ENCODE measurements at regions of chr17 and their contacts with region 1.

Region 1: DNA sequence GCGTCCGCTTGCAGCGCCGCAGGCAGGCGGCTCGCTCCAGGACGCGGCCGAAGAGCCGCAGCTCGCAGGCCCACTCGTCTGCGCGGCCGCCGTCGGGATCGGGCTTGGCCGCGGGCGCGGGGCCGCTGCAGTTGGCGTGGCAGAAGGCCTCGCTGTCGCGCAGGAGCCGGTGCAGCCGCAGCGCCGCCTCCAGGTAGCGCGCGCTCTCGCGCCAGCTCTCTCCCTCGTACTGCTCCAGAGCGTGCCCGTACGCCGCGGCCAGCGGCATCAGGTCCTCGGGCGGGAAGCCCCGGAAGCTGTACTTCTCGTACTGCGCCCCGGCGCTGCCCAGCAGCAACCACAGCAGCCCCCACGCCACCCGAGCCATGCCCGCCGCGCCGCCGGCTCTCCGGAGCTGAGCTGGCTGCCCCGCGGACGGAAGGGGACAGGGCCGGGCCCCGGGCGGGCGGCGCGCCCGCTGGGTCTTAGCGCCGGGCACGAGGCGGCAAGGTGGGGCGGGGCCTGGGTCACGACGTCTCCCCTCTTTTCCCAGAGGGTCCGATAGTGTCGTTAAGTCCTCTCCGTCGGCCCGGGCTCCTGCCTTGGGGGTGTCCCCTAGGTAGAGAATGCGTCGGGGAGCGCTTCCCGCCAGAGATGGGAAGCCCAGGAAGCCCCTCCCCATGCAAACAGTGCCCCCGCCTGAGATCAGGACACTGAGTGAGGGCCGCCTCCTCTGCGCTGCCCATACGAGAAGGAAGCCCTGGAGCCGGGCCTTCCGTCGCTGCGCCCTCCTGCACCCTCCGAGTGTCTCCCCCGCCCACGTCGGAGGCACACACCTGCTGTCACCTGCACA is at the start of gene P3H4:
- DNase-seq: peak; percentile 86 to 87
- ATAC-seq: peak; percentile 83 to 86
- H3K4me3 ChIP-seq: peak within 1 kb of the TSS; percentile 79
- H3K27ac ChIP-seq: peak within 1 kb of the TSS; percentile 96 to 97
- H3K4me1 ChIP-seq: peaks cover 30% of the 10 kb centered on the region
- CTCF ChIP-seq: peak; percentile 90
- EP300 ChIP-seq: no peak
- POLR2A ChIP-seq: peak; percentile 47; the same call in 1 of the 2 replicates
- RAD21 ChIP-seq: peak; percentile 51 to 80
- polyA plus RNA-seq, gene P3H4: 32.1 and 36.0 TPM in 2 replicates

Region 2: GRCh38 chr17:41688699-41689496 is 122.9 kb before region 1 on chr17 and contains the start of gene EIF1:
- CTCF ChIA-PET with region 1: interaction called, 4 read pairs
- POLR2A ChIA-PET with region 1: interaction called, 17 read pairs
- DNase-seq: peak; percentile 98 to 100
- ATAC-seq: peak; percentile 71 to 83
- H3K4me3 ChIP-seq: peak within 1 kb of the TSS; percentile 93
- H3K27ac ChIP-seq: peak within 1 kb of the TSS; percentile 95 to 98
- H3K4me1 ChIP-seq: peaks cover 29% of the 10 kb centered on the region
- CTCF ChIP-seq: no peak
- EP300 ChIP-seq: peak in 1 of 2 experiments; percentile 52; a peak in 1 of 5 replicates
- POLR2A ChIP-seq: peak; percentile 92
- RAD21 ChIP-seq: no peak
- polyA plus RNA-seq, gene EIF1: 873 and 1,224 TPM in 2 replicates

Region 3: GRCh38 chr17:41786227-41787020 is 25.3 kb before region 1 on chr17 and contains the start of gene JUP:
- CTCF ChIA-PET with region 1: interaction called, 3,262 read pairs
- POLR2A ChIA-PET with region 1: interaction called, 14 read pairs
- DNase-seq: peak; percentile 100
- ATAC-seq: peak; percentile 90 to 95
- H3K4me3 ChIP-seq: peak within 1 kb of the TSS; percentile 83
- H3K27ac ChIP-seq: peak within 1 kb of the TSS; percentile 86
- H3K4me1 ChIP-seq: peaks cover 43% of the 10 kb centered on the region
- CTCF ChIP-seq: peak; percentile 96
- EP300 ChIP-seq: no peak; a peak in 1 of 5 replicates
- POLR2A ChIP-seq: peak; percentile 85
- RAD21 ChIP-seq: peak; percentile 42 to 70; a peak in 4 of 5 replicates
- polyA plus RNA-seq, gene JUP: 54.8 and 110 TPM in 2 replicates

Region 4: GRCh38 chr17:41824086-41824485 is 12.3 kb after region 1 on chr17:
- CTCF ChIA-PET with region 1: interaction called, 19 read pairs
- POLR2A ChIA-PET with region 1: interaction called, 8 read pairs
- DNase-seq: no peak
- ATAC-seq: no peak; a peak in 1 of 6 replicates
- H3K4me3 ChIP-seq: no peak overlapping the region
- H3K27ac ChIP-seq: no peak overlapping the region
- H3K4me1 ChIP-seq: no peaks in the 10 kb centered on the region
- CTCF ChIP-seq: no peak
- EP300 ChIP-seq: no peak
- POLR2A ChIP-seq: no peak
- RAD21 ChIP-seq: no peak

Region 5: GRCh38 chr17:41864836-41865595 is 53.3 kb after region 1 on chr17 and contains the start of gene KLHL11:
- CTCF ChIA-PET with region 1: interaction called, 5 read pairs
- POLR2A ChIA-PET with region 1: interaction called, 13 read pairs
- DNase-seq: peak; percentile 93 to 96
- ATAC-seq: peak; percentile 89 to 96
- H3K4me3 ChIP-seq: peak within 1 kb of the TSS; percentile 89
- H3K27ac ChIP-seq: peak within 1 kb of the TSS; percentile 92 to 94
- H3K4me1 ChIP-seq: peaks cover 34% of the 10 kb centered on the region
- CTCF ChIP-seq: no peak
- EP300 ChIP-seq: no peak
- POLR2A ChIP-seq: peak; percentile 96
- RAD21 ChIP-seq: peak in 1 of 2 experiments; percentile 24; a peak in 2 of 5 replicates
- polyA plus RNA-seq, gene KLHL11: 12.7 and 13.7 TPM in 2 replicates

Region 6: DNA sequence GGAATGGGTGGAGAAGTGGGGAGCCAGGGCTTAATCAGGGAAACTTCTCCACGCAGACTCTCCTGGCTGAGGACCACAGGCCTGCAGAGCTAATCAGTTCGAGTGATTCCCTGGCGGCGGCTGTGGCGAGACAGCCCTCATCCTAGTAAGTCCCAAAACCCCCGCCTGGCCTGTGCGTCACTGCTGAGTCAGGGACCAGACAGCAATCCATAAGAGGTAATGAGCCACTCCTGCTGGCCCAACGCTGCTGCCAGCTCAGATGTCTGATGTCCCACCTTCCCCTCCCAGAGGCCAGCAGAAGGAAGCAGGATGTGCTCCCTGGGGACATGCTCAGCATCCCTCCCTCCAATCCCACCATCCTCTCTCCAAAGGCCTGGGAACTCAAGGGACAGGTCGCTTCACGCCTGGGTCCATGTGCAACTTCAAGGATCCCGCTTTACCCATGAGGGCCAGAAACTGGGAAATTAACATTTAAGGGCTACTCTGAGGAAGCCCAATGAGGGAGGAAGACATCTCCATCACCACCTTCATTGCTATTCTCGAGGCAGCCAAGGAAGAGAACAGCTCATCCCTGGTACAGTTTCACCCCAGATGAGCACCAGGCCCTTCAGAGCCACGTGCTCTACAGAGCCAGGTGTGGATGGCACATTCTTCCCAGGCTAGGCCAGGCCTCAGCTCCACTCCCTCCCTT is 99.1 kb after region 1 on chr17:
- CTCF ChIA-PET with region 1: interaction called, 10 read pairs
- POLR2A ChIA-PET with region 1: no interaction called
- DNase-seq: peak; percentile 97 to 98
- ATAC-seq: peak; percentile 68 to 77
- H3K4me3 ChIP-seq: no peak overlapping the region
- H3K27ac ChIP-seq: peak overlapping the region; percentile 93 to 96
- H3K4me1 ChIP-seq: peaks cover 100% of the 10 kb centered on the region
- CTCF ChIP-seq: peak; percentile 13; the same call in 1 of the 3 replicates
- EP300 ChIP-seq: peak; percentile 37 to 63; a peak in 2 of 5 replicates
- POLR2A ChIP-seq: no peak
- RAD21 ChIP-seq: peak; percentile 20 to 49; a peak in 3 of 5 replicates